Heart left ventricle (tissue), 16 donors: ENCODE measurements at regions of chr16 and their contacts with region 1.

Region 1: DNA sequence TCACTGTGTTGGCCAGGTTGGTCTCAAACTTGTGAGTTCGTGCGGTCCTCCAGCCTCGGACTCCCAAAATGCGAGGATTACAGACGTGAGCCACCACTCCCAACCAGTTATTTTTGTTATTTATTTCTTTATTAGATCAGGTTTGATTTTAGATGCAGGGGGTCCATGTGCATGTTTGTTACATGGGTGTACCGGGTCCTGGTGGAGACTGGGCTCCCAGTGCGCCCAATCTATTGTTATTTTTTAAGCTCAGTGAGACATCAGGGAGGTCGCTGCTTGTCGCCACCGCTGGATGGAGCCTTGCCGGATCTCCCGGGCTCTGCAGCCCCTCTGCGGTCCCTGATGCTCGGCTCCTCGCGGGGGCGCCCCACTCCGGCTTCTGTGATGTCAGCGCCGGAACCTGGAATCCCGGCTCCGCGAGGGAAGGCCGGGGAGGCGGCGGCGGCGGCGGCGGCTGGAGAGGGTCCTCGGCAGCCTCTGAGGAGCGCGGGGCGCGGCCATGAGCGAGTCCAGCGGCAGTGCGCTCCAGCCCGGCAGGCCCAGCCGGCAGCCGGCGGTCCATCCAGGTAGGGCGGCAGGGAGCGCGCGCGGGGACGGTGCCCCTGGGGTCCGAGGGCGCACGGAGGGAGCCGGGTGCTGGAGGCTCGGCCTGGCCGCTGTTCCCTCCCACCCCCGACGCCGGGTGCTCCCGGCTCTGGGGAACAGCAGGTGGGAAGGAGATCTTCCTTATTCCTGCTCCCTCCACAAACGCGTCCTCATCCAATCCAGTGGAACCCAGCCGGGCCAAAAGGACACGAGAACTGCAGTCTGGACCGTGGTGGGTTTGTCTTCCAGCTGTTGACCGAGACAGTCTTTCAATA is at the start of gene TMC7:
- DNase-seq: peak; percentile 83 to 87 (median 85)
- ATAC-seq: peak; percentile 78 to 99 (median 98)
- H3K4me3 ChIP-seq: peak within 1 kb of the TSS; percentile 54 to 85 (median 66)
- H3K27ac ChIP-seq: peak within 1 kb of the TSS; percentile 10 to 87 (median 76)
- H3K4me1 ChIP-seq: peaks cover 0 to 16% (median 3%) of the 10 kb centered on the region in 12 donors
- H3K27me3 ChIP-seq: peaks cover 0 to 20% (median 0%) of the 10 kb centered on the region in 9 donors
- CTCF ChIP-seq: peak; percentile 53 to 91 (median 78)
- POLR2A ChIP-seq: peak in 1 of 2 donors; percentile 36
- total RNA-seq, gene TMC7: 0.69 to 2.3 (median 0.96) TPM

Region 2: DNA sequence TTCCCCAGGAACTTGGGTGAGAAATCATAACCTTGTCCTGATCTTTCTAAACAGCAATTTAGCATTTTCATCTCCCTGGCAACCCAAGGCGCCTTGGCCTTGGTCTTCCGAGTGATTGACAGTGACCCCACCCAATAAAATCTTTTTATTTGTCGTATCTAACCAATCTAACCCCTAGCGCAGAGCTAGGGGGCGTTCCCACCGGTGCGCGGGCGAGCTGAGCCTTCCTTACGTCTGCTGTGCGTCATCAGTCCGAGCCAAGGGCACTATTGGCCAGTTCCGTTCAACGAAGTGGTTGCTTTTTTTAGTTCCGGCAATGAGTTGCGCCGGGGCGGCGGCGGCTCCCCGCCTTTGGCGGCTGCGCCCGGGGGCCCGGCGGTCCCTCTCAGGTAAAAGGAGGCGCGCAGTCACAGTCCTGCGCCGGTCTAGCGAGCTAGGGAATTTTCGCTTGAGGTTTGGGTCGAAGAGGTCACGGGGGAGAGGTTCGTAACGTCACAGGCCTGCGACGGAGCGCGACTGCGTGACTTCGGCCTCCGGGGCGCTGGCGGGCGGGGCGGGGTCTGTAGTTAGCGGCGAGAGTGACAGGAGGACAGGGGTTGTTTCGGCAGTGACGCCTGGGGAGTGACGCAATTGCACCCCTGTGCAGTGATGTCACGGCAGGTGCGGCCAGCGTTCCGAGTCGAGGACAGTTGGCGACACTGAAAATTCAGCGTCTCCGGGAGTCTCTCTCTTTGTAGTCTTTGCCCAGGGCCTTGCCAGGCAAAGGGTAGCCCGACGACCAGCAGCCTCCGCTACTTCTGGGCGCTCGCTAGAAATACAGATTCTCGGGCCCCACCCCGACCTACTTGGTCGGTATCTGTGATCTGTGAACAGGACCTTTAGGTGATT is 83.8 kb after region 1 on chr16 and contains the start of gene COQ7:
- intact Hi-C with region 1: loop called (anchors 2 to 10 kb)
- DNase-seq: peak; percentile 99 to 100 (median 99)
- ATAC-seq: peak; percentile 96 to 99 (median 98)
- H3K4me3 ChIP-seq: peak within 1 kb of the TSS; percentile 58 to 91 (median 76)
- H3K27ac ChIP-seq: peak within 1 kb of the TSS; percentile 95 to 100 (median 98)
- H3K4me1 ChIP-seq: peaks cover 0 to 23% (median 14%) of the 10 kb centered on the region in 12 donors
- H3K27me3 ChIP-seq: no peaks in the 10 kb centered on the region
- CTCF ChIP-seq: peak in 3 of 12 donors; percentile 7 to 32 (median 19)
- POLR2A ChIP-seq: peak in 1 of 2 donors; percentile 66
- total RNA-seq, gene COQ7: 24.9 to 45.1 (median 39.5) TPM

Region 3: DNA sequence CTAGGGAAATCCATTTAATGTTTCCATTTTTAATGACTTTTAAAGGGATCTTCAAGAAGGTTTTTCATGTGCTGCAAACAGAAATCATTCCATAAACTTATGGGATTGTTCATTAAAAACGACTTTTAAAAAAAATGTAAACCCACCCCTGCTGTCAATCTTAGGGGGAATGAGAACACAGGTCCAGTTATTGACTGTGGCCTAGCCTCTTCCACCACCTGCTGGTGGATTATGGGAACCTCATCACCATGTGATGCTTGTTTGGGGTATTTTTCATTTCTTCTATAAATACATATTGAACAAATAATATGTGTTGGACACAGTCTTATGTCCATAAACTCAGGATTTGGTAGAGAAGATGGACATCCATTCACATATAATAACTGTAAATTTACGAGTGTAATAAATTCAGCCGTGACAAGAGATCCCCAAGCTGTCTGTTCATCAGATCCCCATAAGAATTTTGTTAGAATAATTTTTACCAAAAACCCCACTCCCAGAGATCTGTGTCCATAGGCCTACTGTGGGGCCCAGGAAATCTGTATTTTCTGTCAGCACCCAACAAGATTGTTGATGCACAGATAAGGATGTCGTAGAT is 391.9 kb after region 1 on chr16:
- intact Hi-C with region 1: loop called in 3 of 10 experiments (anchors 5 to 10 kb)
- DNase-seq: peak in 3 of 5 donors; percentile 19 to 32 (median 28)
- ATAC-seq: peak in 3 of 4 donors; percentile 59 to 75 (median 71)
- H3K4me3 ChIP-seq: no peak overlapping the region
- H3K27ac ChIP-seq: no peak overlapping the region
- H3K4me1 ChIP-seq: peaks cover 0 to 3% (median 0%) of the 10 kb centered on the region in 12 donors
- H3K27me3 ChIP-seq: no peaks in the 10 kb centered on the region
- CTCF ChIP-seq: peak; percentile 77 to 93 (median 82)
- POLR2A ChIP-seq: no peak

Region 4: GRCh38 chr16:19502395-19503131 is 518.8 kb after region 1 on chr16:
- intact Hi-C with region 1: loop called in 1 of 10 experiments (anchors 10 kb)
- DNase-seq: peak in 4 of 5 donors; percentile 57 to 69 (median 60)
- ATAC-seq: peak in 3 of 4 donors; percentile 63 to 72 (median 65)
- H3K4me3 ChIP-seq: no peak overlapping the region
- H3K27ac ChIP-seq: no peak overlapping the region
- H3K4me1 ChIP-seq: peaks cover 0 to 12% (median 2%) of the 10 kb centered on the region in 12 donors
- H3K27me3 ChIP-seq: no peaks in the 10 kb centered on the region
- CTCF ChIP-seq: peak; percentile 55 to 79 (median 68)
- POLR2A ChIP-seq: no peak